AG04450 (cell line): ENCODE measurements at regions of chr2 and their contacts with region 1.

Region 1: GRCh38 chr2:197434541-197435513 is at the start of gene SF3B1:
- DNase-seq: peak; percentile 94
- H3K4me3 ChIP-seq: peak within 1 kb of the TSS; percentile 70
- H3K27ac ChIP-seq: peak within 1 kb of the TSS; percentile 97
- H3K27me3 ChIP-seq: no peaks in the 10 kb centered on the region
- CTCF ChIP-seq: no peak
- polyA plus RNA-seq, gene SF3B1: 502 and 651 TPM in 2 replicates

Region 2: DNA sequence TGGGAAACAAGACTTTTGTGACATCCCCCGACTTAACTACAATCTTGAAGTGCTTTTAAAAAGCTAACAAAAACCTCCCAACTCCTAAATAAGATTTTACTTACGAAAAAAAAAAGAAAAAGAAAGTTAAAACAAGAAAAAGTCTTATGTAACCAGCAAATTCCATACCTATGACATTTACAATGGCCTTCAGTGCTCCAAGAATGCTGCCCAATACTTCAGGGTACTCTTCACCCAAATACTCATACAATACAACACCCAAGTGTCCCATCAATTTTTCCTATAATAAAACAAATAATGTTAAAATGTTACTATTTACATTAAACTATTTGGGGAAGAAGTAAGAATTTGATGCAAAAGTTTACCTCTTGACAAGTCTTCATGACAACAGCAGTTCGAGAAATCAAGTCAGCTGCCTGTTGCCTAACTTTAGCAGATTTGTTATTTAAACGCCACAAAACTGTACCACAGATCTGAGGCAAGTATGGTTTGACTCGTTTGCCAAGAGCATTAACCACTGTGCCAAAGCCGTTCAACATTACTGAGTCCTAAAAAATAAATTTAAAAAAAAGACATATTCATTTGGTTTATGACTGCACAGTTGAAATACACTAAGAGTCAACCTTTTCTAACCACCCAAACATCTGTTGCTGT is 34.8 kb before region 1 on chr2:
- CTCF ChIA-PET with region 1: no interaction called
- POLR2A ChIA-PET with region 1: no interaction called
- DNase-seq: no peak
- H3K4me3 ChIP-seq: no peak overlapping the region
- H3K27ac ChIP-seq: no peak overlapping the region
- H3K27me3 ChIP-seq: no peaks in the 10 kb centered on the region
- CTCF ChIP-seq: no peak

Region 3: DNA sequence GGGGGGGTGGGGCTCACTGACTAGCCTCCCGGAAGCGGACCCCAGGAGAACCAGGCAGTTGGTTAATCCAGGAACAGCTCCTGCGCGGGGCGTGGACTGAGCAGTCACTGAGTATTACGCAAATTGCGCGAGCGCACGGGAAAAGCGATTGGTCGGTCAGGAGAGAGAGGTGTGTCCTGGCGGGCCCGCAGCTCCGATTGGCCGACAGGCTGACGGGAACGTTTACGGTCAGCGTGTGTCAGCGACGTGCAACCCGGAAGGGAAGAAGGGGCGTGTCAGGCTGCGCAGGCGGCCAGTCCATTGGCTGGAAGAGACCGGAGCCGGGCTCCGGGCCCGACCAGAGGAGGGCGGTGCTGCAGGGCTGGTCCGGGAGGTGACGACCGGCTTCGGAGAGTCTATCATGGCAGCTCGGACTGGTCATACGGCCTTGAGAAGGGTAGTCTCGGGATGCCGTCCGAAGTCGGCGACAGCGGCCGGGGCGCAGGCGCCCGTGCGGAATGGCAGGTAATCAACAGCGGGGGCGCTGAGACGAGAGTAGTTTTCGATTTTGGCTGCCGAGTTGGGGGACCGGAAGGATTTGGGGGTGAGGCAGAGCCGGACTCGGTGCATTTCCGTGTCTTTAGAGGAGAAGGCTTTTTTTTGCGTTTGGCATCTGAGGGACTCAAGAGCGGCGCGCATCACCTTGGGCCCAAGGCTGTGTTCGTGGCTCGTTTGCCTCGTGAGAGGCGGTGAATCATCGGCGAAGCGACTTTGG is 18.5 kb after region 1 on chr2 and contains the start of gene COQ10B:
- CTCF ChIA-PET with region 1: interaction called, 7 read pairs
- POLR2A ChIA-PET with region 1: interaction called, 49 read pairs
- DNase-seq: peak; percentile 100
- H3K4me3 ChIP-seq: peak within 1 kb of the TSS; percentile 98
- H3K27ac ChIP-seq: peak within 1 kb of the TSS; percentile 100
- H3K27me3 ChIP-seq: no peaks in the 10 kb centered on the region
- CTCF ChIP-seq: peak; percentile 29
- polyA plus RNA-seq, gene COQ10B: 5.8 and 8.8 TPM in 2 replicates

Region 4: GRCh38 chr2:197804049-197804757 is 369.4 kb after region 1 on chr2 and contains the start of gene PLCL1:
- CTCF ChIA-PET with region 1: no interaction called
- POLR2A ChIA-PET with region 1: no interaction called
- DNase-seq: peak; percentile 80
- H3K4me3 ChIP-seq: peak within 1 kb of the TSS; percentile 66
- H3K27ac ChIP-seq: no peak within 1 kb of the TSS
- H3K27me3 ChIP-seq: peaks cover 13% of the 10 kb centered on the region
- CTCF ChIP-seq: no peak
- polyA plus RNA-seq, gene PLCL1: 0.22 and 0.43 TPM in 2 replicates